AG04449 (cell line): ENCODE measurements at regions of chr17 and their contacts with region 1.

Region 1: DNA sequence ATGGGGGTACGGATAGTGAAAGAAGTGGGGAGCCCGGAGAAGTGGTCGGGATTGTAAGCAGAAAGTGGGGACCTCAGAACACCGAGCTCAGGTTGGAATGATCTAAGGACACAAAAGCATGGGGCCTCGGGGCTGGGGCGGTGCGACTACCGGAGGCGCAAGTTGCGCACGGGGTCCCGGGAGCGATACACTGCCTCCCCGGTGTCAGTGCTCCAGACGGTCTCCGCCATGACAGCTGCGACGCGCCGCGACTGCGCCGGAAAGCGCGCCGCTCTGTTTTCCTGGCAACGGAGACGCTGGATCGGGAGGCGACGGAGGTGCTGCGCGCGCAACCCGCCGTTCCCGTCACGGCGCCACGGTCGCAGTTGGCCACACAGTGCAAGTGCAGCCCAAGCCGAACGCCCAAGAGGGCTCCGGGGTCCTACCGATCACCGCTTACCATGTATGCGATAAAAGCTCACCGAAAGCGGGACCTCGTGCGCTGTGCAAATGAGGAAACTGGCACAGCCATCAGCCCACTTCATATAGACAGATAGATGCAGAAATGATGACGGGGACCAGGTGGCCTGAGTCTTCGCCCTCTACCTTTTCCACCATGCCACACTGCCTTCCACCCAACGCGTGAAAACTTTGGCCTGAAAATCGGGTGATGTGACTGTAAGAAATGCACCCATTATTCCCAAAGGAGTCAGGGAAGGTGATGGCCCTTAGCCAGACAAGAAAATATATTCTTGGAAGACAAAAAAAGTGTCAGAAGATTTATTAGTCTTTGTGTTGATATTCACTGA is at the start of gene MKS1:
- DNase-seq: peak; percentile 29
- H3K4me3 ChIP-seq: peak within 1 kb of the TSS; percentile 94
- CTCF ChIP-seq: peak; percentile 77

Region 2: GRCh38 chr17:58200017-58200633 is 19.1 kb before region 1 on chr17:
- CTCF ChIA-PET with region 1: interaction called, 10 read pairs
- POLR2A ChIA-PET with region 1: interaction called, 3 read pairs
- DNase-seq: no peak
- H3K4me3 ChIP-seq: no peak overlapping the region
- CTCF ChIP-seq: peak; percentile 71

Region 3: GRCh38 chr17:58232707-58233156 is 13.5 kb after region 1 on chr17:
- CTCF ChIA-PET with region 1: interaction called, 44 read pairs
- POLR2A ChIA-PET with region 1: interaction called, 4 read pairs
- DNase-seq: peak; percentile 71
- H3K4me3 ChIP-seq: no peak overlapping the region
- CTCF ChIP-seq: no peak